ENCODE measurements at regions of chr6 and their contacts with region 1.

Region 1: DNA sequence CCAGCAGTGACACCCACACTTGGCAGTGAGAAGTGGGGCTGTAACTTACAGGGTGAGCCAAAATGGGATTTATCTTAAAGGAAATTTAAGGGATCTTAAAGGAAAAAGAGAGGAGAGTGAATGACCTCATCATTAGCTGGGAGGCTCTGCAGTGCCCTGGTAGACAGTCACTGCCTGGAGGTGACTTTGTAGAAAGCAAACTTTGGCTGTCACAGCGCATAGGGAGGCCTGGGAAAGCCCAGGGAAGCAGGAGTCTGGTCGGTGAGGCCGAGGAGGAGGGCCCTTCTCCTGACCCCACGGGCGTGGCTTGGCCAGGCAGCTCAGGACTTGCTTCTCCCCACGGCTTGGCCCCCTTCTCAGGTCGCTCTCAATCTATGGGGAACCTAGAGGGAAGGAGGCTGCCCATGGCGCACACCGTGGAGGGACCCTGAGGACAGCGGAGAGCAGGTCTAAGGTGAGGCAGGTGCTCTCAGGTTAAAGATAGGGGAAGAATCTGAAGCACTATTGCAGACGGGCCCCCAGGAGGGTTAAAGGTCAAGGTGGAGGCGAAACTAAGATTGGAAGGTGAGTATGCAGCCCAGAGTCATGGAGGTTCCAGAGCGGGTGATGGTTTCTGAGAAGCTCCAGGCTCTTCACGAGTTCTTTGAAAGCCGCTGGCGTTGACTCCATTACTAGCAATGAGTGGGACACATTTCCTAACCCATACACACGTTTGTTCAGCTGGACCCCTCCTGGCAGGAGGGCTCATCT is 15.6 kb upstream of the RIPK1 start:
- DNase-seq: no peak
- ATAC-seq: no peak
- H3K4me3 ChIP-seq: no peak overlapping the region
- H3K4me3 Mint-ChIP-seq: peak overlapping the region; percentile 70
- H3K27ac ChIP-seq: no peak overlapping the region
- H3K27ac Mint-ChIP-seq: no peak overlapping the region
- H3K4me1 ChIP-seq: peaks cover 8% of the 10 kb centered on the region
- H3K4me1 Mint-ChIP-seq: peaks cover 13% of the 10 kb centered on the region
- H3K27me3 ChIP-seq: no peaks in the 10 kb centered on the region
- H3K27me3 Mint-ChIP-seq: no peaks in the 10 kb centered on the region
- CTCF ChIP-seq: no peak

Region 2: GRCh38 chr6:2791124-2791974 is 261.3 kb before region 1 on chr6:
- CTCF ChIA-PET with region 1: no interaction called
- POLR2A ChIA-PET with region 1: no interaction called
- intact Hi-C with region 1: loop called (anchors 1 to 2 kb)
- DNase-seq: peak in 8 of 9 experiments; percentile 21 to 75 (median 47)
- ATAC-seq: peak; percentile 79
- H3K4me3 ChIP-seq: no peak overlapping the region
- H3K4me3 Mint-ChIP-seq: peak overlapping the region; percentile 13
- H3K27ac ChIP-seq: peak overlapping the region in 1 of 2 experiments; percentile 10
- H3K27ac Mint-ChIP-seq: peak overlapping the region; percentile 77
- H3K4me1 ChIP-seq: peaks cover 33% of the 10 kb centered on the region
- H3K4me1 Mint-ChIP-seq: peaks cover 32% of the 10 kb centered on the region
- H3K27me3 ChIP-seq: no peaks in the 10 kb centered on the region
- H3K27me3 Mint-ChIP-seq: no peaks in the 10 kb centered on the region
- CTCF ChIP-seq: peak; percentile 73

Region 3: DNA sequence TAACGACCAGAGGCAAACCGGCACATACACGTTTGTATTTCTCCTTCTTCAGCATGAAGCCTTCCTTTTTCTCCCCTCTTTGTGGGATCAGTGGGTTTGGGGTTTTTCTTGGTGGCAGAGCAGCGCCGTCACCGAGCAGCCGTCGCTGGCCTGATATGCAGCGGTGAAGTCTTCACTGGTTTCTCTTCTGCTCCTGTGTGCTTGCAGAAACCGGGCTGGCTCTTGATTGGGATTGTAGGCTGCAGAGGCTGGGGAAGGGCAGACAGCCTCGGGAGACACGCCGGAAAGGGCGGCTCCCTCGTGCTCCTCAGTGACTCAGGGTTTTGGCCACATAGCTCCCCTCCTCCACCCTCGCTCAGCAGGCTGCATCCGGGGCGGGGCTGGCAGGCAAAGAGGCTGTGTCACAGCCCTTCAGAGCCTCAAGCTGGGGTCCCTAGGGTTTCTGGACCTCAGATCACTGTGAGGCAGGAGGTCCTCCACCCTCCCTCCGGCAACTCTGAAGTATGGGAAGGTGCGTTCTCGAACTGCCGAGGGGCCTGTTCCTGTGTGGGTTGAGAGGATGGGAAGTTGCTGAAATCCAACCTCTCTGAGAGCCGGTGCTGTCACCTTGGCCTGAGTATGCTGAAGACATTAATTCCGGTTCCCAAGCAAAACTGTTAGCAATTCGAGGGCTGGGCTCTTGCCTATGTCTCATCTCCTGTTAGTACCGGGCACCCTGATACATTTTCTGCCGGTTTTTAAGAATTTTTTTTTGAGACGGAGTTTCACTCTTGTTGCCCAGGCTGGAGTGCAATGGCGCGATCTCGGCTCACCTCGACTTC is 28.8 kb before region 1 on chr6:
- CTCF ChIA-PET with region 1: interaction called, 5 read pairs
- POLR2A ChIA-PET with region 1: interaction called, 10 read pairs
- intact Hi-C with region 1: loop called in 1 of 2 experiments (anchors 1 kb)
- DNase-seq: peak; percentile 55 to 93 (median 87)
- ATAC-seq: peak; percentile 88
- H3K4me3 ChIP-seq: peak overlapping the region; percentile 71 to 74
- H3K4me3 Mint-ChIP-seq: peak overlapping the region; percentile 88
- H3K27ac ChIP-seq: peak overlapping the region; percentile 39 to 86
- H3K27ac Mint-ChIP-seq: peak overlapping the region; percentile 86
- H3K4me1 ChIP-seq: peaks cover 40% of the 10 kb centered on the region
- H3K4me1 Mint-ChIP-seq: peaks cover 46% of the 10 kb centered on the region
- H3K27me3 ChIP-seq: no peaks in the 10 kb centered on the region
- H3K27me3 Mint-ChIP-seq: no peaks in the 10 kb centered on the region
- CTCF ChIP-seq: no peak